ENCODE measurements at regions of chr1 and their contacts with region 1.

Region 1: DNA sequence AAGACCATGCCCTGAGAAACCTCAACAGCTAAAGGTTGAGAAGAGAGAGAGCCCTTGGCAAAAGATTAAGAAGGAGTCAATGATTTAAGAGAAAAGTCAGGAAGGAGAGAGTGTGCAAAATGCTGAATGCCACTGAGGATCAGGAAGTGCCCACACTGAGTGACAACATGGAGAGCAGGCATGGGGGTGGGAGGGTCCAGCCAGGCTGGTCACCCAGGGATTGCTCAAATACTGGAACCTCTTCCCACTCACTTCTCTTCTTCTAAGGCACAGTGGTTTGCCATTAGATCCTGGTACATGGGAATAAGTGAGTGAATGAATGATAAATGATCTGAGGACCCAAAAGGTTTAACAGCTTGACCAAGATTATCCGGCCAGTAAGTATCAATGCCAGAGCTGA is 11.1 kb downstream of the PRR9 start:
- H3K4me3 ChIP-seq: no peak overlapping the region
- H3K27ac ChIP-seq: no peak overlapping the region
- H3K4me1 ChIP-seq: no peaks in the 10 kb centered on the region
- CTCF ChIP-seq: no peak

Region 2: DNA sequence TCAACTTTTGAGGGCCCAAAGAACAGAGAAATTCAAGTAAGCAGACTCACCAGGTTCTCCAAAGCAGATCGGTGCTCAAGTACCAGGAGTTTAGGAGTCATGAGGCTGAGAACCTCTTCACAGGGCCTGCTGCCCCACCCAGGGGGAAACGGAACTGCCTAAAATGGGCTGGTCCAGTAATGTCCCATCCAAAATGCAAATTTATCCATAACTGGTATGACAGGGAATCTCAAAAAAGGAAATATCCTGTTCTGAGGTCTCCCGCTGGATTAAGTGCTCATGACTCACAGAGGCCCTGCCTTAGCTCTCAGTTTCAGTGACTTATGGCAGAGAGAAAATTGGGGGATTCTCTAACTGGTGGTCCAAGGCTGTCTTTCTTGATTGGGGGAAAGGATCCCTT is 87.1 kb before region 1 on chr1:
- CTCF ChIA-PET with region 1: no interaction called
- POLR2A ChIA-PET with region 1: no interaction called
- H3K4me3 ChIP-seq: no peak overlapping the region
- H3K27ac ChIP-seq: no peak overlapping the region
- H3K4me1 ChIP-seq: no peaks in the 10 kb centered on the region
- CTCF ChIP-seq: no peak

Region 3: GRCh38 chr1:153238536-153238935 is 10.0 kb after region 1 on chr1:
- CTCF ChIA-PET with region 1: interaction called, 13 read pairs
- POLR2A ChIA-PET with region 1: no interaction called
- H3K4me3 ChIP-seq: no peak overlapping the region
- H3K27ac ChIP-seq: no peak overlapping the region
- H3K4me1 ChIP-seq: no peaks in the 10 kb centered on the region
- CTCF ChIP-seq: peak; percentile 45; the same call in 1 of the 2 replicates